Cardiac septum (tissue), 1 donor: ENCODE measurements at regions of chr19 and their contacts with region 1.

Region 1: GRCh38 chr19:57362997-57363705 is at the starts of genes TRAPPC2B and ZNF547:
- DNase-seq: peak; percentile 99
- total RNA-seq, gene TRAPPC2B: 10.2 TPM
- total RNA-seq, gene ZNF547: 4.0 TPM

Region 2: DNA sequence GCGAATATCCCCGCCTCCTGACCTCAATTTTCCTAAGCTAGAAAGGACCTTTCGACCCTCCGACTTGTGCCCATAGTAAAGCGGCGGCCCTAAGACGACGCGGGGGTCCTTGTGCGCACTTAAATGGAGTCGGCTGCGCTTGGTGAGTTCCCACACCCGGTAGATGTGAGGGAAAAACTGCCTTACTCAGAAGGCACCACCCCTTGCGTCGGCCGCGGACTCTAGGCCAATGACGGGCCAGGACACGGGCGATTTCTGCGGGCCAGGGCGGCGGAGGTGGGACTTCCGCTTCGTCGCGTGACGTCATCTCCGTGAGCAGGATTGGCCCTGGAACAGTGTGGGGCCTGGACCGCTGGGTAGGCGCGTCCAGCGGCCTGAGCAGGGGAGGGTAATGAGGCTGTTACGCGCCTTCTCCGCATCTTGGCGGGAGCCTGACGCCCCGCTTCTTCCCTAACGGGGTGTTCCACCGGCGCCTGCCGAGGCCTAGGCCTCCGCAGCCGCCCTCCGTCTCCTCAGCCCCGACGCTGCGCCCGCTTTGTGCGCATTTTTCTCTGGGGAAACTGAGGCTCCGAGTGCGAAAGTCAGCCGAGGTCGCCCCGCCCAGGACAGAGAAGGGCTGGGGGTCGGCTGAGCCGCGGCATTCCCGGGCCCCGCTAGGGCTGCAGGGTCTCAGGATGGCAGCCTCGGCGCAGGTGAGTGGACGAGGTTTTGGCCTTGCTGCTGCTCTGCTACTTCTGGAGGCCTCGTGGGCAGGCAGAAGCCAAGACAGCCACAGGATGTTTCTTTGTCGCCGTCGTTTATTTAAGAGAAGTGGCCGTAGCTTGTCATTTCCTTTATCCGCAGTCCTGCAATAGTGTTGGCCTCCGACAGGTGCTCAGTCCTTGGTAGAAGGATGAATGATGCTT is 42.7 kb before region 1 on chr19 and contains the start of gene ZNF543:
- intact Hi-C with region 1: loop called (anchors 5 kb)
- DNase-seq: peak; percentile 97
- total RNA-seq, gene ZNF543: 6.1 TPM

Region 3: DNA sequence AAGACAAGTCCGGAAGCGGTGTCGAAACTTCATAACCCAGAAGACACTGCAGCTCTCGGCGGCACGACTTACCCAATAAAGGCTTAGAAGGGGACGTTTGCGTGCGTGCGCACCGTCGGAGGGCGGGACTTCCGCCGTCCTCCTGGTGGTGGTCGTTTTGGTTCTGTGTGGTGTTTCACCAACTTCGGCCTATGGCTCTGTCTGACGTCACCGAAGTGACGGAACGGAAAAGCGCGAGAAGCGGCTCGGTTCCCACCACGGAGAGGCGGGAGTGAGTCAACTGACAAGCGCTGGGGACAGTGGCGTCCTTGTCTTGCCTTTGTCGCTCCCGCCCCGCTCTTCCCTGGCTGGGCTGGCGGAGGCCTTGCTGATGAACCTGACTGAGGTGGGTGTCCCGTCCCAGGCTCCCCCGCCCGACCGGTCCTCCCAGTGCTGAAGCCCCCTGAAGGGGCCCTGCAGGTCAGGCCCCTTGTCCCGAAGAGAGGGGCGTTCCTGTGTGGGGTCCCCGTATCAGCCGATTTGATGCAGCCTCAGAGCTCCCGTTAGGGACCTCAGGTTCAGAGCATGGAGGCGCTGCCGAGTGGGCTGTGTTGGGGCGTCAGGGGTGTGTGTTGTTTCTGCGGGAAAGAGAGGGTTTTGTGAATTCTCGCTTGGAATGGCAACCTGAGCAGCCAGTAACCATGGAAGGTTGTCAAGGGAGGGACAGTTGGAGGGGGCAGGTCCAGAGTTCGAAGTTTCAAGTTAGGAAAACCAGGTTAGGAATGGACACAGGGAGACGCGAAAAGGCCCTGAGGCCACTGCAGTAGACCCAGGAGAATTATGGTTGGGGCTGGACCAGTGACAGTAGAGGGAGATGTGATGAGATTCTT is 26.8 kb after region 1 on chr19 and contains the start of gene ZNF548:
- intact Hi-C with region 1: loop called (anchors 2 kb)
- DNase-seq: peak; percentile 95
- total RNA-seq, gene ZNF548: 16.1 TPM

Region 4: GRCh38 chr19:57599761-57600383 is 236.7 kb after region 1 on chr19 and contains the start of gene ZNF530:
- intact Hi-C with region 1: no loop called
- DNase-seq: peak; percentile 96
- total RNA-seq, gene ZNF530: 3.5 TPM